Activated CD4-positive, alpha-beta memory T cell treated with anti-CD3 and anti-CD28 coated beads, Interleukin-2, amount 10 ng/mL, durations not matched to agents 7 days and 5 days (primary cell): ENCODE measurements at regions of chr13 and their contacts with region 1.

Region 1: GRCh38 chr13:48975856-48976575 is at the start of gene FNDC3A:
- DNase-seq: peak; percentile 89
- H3K4me3 Mint-ChIP-seq: peak within 1 kb of the TSS; percentile 94
- H3K27ac Mint-ChIP-seq: peak within 1 kb of the TSS; percentile 100
- H3K4me1 Mint-ChIP-seq: peaks cover 41% of the 10 kb centered on the region
- H3K27me3 Mint-ChIP-seq: no peaks in the 10 kb centered on the region
- total RNA-seq, gene FNDC3A: 27.0 to 27.8 TPM

Region 2: DNA sequence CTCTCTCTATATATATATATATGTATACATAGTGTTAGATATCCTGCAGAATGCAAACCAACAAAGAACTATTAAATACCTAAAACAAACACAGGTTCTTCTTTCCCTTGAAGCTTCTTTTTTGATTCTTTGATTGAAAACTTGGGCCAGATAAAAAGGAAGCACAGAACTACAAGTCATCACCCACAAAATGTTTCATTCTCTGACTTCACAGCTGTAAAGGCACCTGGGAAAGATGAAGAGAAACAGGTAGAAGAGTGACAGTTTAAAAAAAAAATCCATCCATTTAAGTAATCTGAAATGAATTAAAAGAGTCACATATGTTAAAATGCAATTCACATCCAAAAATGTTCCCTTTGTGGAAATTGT is 91.0 kb before region 1 on chr13:
- CTCF ChIA-PET with region 1: interaction called, 3 read pairs
- POLR2A ChIA-PET with region 1: interaction called, 31 read pairs
- DNase-seq: no peak
- H3K4me3 Mint-ChIP-seq: no peak overlapping the region
- H3K27ac Mint-ChIP-seq: peak overlapping the region; percentile 86
- H3K4me1 Mint-ChIP-seq: peaks cover 56% of the 10 kb centered on the region
- H3K27me3 Mint-ChIP-seq: no peaks in the 10 kb centered on the region

Region 3: GRCh38 chr13:49110122-49110912 is 134.3 kb after region 1 on chr13:
- CTCF ChIA-PET with region 1: interaction called, 11 read pairs
- POLR2A ChIA-PET with region 1: interaction called, 13 read pairs
- DNase-seq: peak; percentile 84
- H3K4me3 Mint-ChIP-seq: peak overlapping the region; percentile 87
- H3K27ac Mint-ChIP-seq: peak overlapping the region; percentile 85
- H3K4me1 Mint-ChIP-seq: peaks cover 27% of the 10 kb centered on the region
- H3K27me3 Mint-ChIP-seq: no peaks in the 10 kb centered on the region

Region 4: GRCh38 chr13:49247643-49248621 is 271.9 kb after region 1 on chr13 and contains the start of gene CDADC1:
- CTCF ChIA-PET with region 1: no interaction called
- POLR2A ChIA-PET with region 1: interaction called, 13 read pairs
- DNase-seq: peak; percentile 95
- H3K4me3 Mint-ChIP-seq: peak within 1 kb of the TSS; percentile 97
- H3K27ac Mint-ChIP-seq: peak within 1 kb of the TSS; percentile 90
- H3K4me1 Mint-ChIP-seq: peaks cover 43% of the 10 kb centered on the region
- H3K27me3 Mint-ChIP-seq: peaks cover 18% of the 10 kb centered on the region
- total RNA-seq, gene CDADC1: 12.8 to 16.7 TPM